Gastrocnemius medialis (tissue), 4 donors: ENCODE measurements at regions of chr12 and their contacts with region 1.

Region 1: GRCh38 chr12:56127888-56128669 is at the start of gene ESYT1:
- DNase-seq: peak; percentile 99 to 100
- ATAC-seq: peak; percentile 87
- H3K4me3 ChIP-seq: peak within 1 kb of the TSS; percentile 71 to 95 (median 88)
- H3K27ac ChIP-seq: peak within 1 kb of the TSS; percentile 92 to 99 (median 98)
- H3K4me1 ChIP-seq: peaks cover 44 to 51% of the 10 kb centered on the region in 2 donors
- H3K27me3 ChIP-seq: no peaks in the 10 kb centered on the region
- CTCF ChIP-seq: peak in 1 of 5 experiments; percentile 13
- POLR2A ChIP-seq: peak; percentile 98 to 99
- total RNA-seq, gene ESYT1: 45.9 to 77.7 (median 62.1) TPM

Region 2: GRCh38 chr12:56152318-56153033 is 24.4 kb after region 1 on chr12 and contains the start of gene MYL6B:
- in situ Hi-C with region 1: no loop called
- intact Hi-C with region 1: loop called (anchors 1 kb)
- DNase-seq: peak; percentile 92 to 93
- ATAC-seq: peak; percentile 86 to 93
- H3K4me3 ChIP-seq: peak within 1 kb of the TSS; percentile 61 to 82 (median 75)
- H3K27ac ChIP-seq: peak within 1 kb of the TSS; percentile 88 to 97 (median 96)
- H3K4me1 ChIP-seq: peaks cover 24 to 36% of the 10 kb centered on the region in 2 donors
- H3K27me3 ChIP-seq: no peaks in the 10 kb centered on the region
- CTCF ChIP-seq: no peak
- POLR2A ChIP-seq: peak; percentile 54 to 61
- total RNA-seq, gene MYL6B: 159 to 334 (median 198) TPM

Region 3: GRCh38 chr12:56158029-56158925 is 30.2 kb after region 1 on chr12 and contains the start of gene MYL6:
- in situ Hi-C with region 1: no loop called
- intact Hi-C with region 1: loop called (anchors 1 kb)
- DNase-seq: peak; percentile 97 to 98
- ATAC-seq: peak; percentile 90 to 94
- H3K4me3 ChIP-seq: peak within 1 kb of the TSS; percentile 68 to 93 (median 80)
- H3K27ac ChIP-seq: peak within 1 kb of the TSS; percentile 87 to 97 (median 96)
- H3K4me1 ChIP-seq: peaks cover 35 to 51% of the 10 kb centered on the region in 2 donors
- H3K27me3 ChIP-seq: no peaks in the 10 kb centered on the region
- CTCF ChIP-seq: peak in 1 of 5 experiments; percentile 7
- POLR2A ChIP-seq: peak; percentile 97 to 98
- total RNA-seq, gene MYL6: 159 to 324 (median 202) TPM

Region 4: DNA sequence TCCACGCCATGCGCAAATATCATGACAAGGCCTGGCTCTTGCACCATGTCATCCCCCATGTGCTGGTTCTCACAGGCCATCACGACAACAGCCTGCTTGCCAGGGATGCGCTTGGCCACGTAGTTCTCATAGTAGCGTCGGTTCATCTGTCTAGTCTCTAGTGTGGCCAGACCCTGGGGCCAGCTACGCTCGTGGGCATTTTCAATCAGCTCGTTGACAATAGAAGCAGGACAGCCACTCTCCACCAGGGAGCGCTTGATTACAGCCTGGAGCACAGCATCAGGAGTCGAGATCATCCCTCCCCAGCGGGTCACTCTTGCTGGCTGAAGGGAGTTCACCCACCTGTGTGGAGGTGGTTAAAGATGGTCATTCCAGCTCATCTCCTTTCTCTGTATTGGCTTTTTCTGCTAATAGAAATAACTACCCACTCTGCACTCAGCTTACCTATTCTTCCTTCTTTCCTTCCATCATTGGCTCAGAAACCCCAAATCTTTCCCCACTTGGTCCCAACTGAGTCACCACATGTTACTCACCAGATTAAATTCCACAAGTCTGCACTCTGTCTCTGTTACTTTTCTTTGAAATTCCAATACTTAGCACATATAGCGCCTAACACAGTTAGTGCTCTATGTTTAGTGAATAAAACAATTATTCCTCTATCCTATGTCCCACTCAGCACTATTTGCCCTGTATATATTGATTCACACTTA is 78.5 kb after region 1 on chr12:
- in situ Hi-C with region 1: no loop called
- intact Hi-C with region 1: no loop called
- DNase-seq: peak; percentile 22 to 56
- ATAC-seq: peak; percentile 55 to 72
- H3K4me3 ChIP-seq: no peak overlapping the region
- H3K27ac ChIP-seq: peak overlapping the region in 1 of 4 donors; percentile 8
- H3K4me1 ChIP-seq: peaks cover 0 to 13% of the 10 kb centered on the region in 2 donors
- H3K27me3 ChIP-seq: no peaks in the 10 kb centered on the region
- CTCF ChIP-seq: peak in 4 of 5 experiments; percentile 45 to 55 (median 55)
- POLR2A ChIP-seq: no peak